Activated CD8-positive, alpha-beta memory T cell treated with anti-CD3 and anti-CD28 coated beads, Interleukin-2, amount 10 ng/mL, durations not matched to agents 7 days and 5 days (primary cell): ENCODE measurements at regions of chr3 and their contacts with region 1.

Region 1: DNA sequence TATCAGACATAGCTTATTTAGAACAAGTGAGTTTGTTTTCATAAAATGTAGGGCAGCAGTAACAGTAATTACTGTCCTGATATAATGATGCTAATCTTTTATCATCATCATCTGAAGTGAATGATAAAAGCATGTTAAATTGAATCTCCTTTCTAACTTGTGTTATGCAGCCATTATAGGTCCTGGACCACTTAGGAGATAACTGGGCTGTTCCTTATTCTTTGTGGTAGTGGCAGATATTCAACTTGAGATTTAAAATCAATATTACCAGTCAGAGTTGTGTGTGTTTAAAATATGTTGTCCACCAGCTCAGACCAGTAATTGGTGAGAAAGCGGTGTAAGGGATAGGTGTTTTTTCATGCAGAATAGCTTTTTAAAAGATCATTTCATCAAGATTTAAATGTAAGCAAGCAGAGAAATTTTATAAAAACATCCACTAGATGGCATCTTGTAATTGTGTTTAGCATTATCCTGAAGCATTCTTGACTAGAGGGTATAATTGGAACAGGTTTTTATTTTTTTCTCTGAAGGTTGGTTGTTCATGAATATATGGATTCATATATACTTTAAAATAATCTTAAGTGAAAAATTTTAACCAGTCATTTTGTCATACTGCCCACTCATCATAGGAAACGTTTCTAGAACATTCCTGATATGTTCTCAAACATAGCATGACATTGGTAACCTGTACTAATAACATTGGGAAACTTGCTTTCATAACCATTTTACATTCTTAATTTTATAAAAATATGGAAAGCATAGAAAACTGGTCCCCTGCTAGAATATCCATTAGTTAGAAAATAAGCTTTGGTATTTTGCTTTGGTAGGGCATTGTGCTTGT is 153.9 kb downstream of the BBX start:
- DNase-seq: no peak
- ATAC-seq: no peak
- H3K4me3 Mint-ChIP-seq: no peak overlapping the region
- H3K27ac Mint-ChIP-seq: no peak overlapping the region
- H3K4me1 Mint-ChIP-seq: peaks cover 10% of the 10 kb centered on the region
- H3K27me3 Mint-ChIP-seq: no peaks in the 10 kb centered on the region

Region 2: GRCh38 chr3:107633327-107634098 is 43.2 kb before region 1 on chr3:
- CTCF ChIA-PET with region 1: no interaction called
- DNase-seq: no peak
- ATAC-seq: peak; percentile 33
- H3K4me3 Mint-ChIP-seq: peak overlapping the region; percentile 28
- H3K27ac Mint-ChIP-seq: peak overlapping the region; percentile 75
- H3K4me1 Mint-ChIP-seq: peaks cover 27% of the 10 kb centered on the region
- H3K27me3 Mint-ChIP-seq: no peaks in the 10 kb centered on the region

Region 3: GRCh38 chr3:107660306-107660976 is 16.2 kb before region 1 on chr3:
- CTCF ChIA-PET with region 1: interaction called, 10 read pairs
- DNase-seq: no peak
- ATAC-seq: no peak
- H3K4me3 Mint-ChIP-seq: no peak overlapping the region
- H3K27ac Mint-ChIP-seq: no peak overlapping the region
- H3K4me1 Mint-ChIP-seq: peaks cover 14% of the 10 kb centered on the region
- H3K27me3 Mint-ChIP-seq: no peaks in the 10 kb centered on the region

Region 4: DNA sequence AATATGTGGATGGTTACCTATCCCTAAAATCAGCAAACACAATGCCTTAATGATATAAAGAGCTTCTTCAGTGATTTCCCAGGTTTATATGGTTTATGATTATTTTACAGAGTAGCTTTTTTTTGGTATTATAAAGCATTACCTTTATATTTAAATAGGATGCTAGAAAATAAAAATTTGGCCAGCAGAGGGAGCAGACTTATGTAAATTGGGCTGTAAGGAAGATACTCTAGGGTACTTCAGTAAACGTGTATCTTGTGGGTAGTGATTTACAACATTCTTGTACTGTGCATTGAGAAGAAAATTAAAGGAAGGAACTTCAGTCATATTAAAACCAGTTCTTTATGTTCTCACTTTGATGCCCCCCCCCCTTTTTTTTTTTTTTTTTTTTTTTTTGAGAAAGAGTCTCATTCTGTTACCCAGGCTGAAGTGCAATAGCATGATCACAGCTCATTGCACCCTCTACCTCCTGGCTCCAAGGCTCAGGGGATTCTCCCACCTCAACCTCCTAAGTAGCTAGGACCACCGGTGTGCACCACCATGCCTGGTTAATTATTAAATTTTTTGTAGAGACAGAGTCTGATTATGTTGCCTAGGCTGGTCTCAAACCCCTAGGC is 13.9 kb after region 1 on chr3:
- CTCF ChIA-PET with region 1: interaction called, 15 read pairs
- DNase-seq: no peak
- ATAC-seq: peak; percentile 23
- H3K4me3 Mint-ChIP-seq: no peak overlapping the region
- H3K27ac Mint-ChIP-seq: no peak overlapping the region
- H3K4me1 Mint-ChIP-seq: no peaks in the 10 kb centered on the region
- H3K27me3 Mint-ChIP-seq: no peaks in the 10 kb centered on the region

Region 5: DNA sequence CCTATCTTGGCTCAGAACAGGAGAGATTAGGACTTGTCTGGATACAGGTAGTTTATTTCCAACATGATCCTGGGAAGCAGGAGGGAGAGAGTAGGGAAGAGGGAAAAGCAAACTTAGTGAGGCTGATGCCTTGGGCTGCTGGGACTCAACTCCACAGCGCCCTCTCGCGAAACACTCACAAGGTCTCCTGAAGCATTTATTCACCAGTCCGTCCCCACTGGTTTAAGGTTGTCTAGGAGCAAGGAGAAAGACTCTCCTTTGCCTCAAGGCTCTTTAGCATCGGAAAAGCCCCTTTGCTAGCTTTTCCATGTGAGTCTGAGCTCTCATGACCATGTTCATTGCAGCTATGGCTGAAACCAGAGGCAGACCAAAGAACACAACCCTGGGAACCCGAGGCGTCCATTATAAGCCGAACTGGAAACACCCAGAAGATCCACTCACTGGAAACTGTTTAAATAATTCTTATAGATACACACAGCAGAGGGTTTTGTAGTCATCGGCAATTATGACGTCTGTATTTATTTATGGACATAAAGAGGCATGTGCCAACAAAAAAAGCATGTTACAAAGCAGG is 169.7 kb after region 1 on chr3:
- CTCF ChIA-PET with region 1: interaction called, 11 read pairs
- DNase-seq: peak; percentile 45
- ATAC-seq: peak; percentile 42
- H3K4me3 Mint-ChIP-seq: no peak overlapping the region
- H3K27ac Mint-ChIP-seq: no peak overlapping the region
- H3K4me1 Mint-ChIP-seq: peaks cover 5% of the 10 kb centered on the region
- H3K27me3 Mint-ChIP-seq: peaks cover 12% of the 10 kb centered on the region